Dorsolateral prefrontal cortex (tissue), 120 donors: ENCODE measurements at regions of chr9 and their contacts with region 1.

Region 1: GRCh38 chr9:131423171-131423581 is 29.3 kb downstream of the PRRC2B start:
- DNase-seq: peak; percentile 51 to 74 (median 70)
- H3K4me3 ChIP-seq: peak overlapping the region in 46 of 59 donors; percentile 1 to 48 (median 26)
- H3K27ac ChIP-seq: peak overlapping the region in 54 of 59 donors; percentile 6 to 96 (median 68)
- H3K27me3 ChIP-seq: no peaks in the 10 kb centered on the region
- CTCF ChIP-seq: peak in 7 of 56 donors; percentile 5 to 28 (median 18)

Region 2: DNA sequence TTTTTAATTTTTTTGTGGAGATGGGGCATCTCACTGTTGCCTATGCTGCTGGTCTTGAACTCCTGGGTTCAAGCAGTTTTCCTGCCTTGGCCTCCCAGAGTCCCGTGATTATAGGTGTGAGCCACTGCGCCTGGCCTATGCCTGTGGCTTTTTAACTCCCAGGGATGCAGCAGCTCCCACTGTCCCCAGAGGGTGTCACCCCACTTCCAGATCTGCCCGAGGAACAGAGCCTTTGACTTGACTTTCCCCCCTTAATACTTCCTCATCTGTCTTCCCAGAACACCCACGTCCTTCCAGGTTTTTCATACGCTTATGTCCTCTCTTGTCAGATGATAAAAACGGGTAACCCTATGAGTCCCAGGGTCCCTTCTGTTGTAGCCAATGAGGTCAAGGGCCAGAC is 36.9 kb before region 1 on chr9:
- intact Hi-C with region 1: loop called in 1 of 2 experiments (anchors 5 kb)
- DNase-seq: no peak
- H3K4me3 ChIP-seq: no peak overlapping the region
- H3K27ac ChIP-seq: no peak overlapping the region
- H3K27me3 ChIP-seq: no peaks in the 10 kb centered on the region
- CTCF ChIP-seq: peak in 27 of 56 donors; percentile 7 to 54 (median 30)